Activated naive CD4-positive, alpha-beta T cell treated with anti-CD3 and anti-CD28 coated beads for 36 hours (primary cell): ENCODE measurements at regions of chr4 and their contacts with region 1.

Region 1: GRCh38 chr4:39638354-39639240 is at the start of gene SMIM14:
- DNase-seq: peak; percentile 93
- H3K4me3 Mint-ChIP-seq: peak within 1 kb of the TSS; percentile 85
- H3K27ac Mint-ChIP-seq: peak within 1 kb of the TSS; percentile 69
- H3K4me1 Mint-ChIP-seq: peaks cover 24% of the 10 kb centered on the region
- H3K27me3 Mint-ChIP-seq: no peaks in the 10 kb centered on the region
- total RNA-seq, gene SMIM14: 2.7 to 3.9 TPM

Region 2: DNA sequence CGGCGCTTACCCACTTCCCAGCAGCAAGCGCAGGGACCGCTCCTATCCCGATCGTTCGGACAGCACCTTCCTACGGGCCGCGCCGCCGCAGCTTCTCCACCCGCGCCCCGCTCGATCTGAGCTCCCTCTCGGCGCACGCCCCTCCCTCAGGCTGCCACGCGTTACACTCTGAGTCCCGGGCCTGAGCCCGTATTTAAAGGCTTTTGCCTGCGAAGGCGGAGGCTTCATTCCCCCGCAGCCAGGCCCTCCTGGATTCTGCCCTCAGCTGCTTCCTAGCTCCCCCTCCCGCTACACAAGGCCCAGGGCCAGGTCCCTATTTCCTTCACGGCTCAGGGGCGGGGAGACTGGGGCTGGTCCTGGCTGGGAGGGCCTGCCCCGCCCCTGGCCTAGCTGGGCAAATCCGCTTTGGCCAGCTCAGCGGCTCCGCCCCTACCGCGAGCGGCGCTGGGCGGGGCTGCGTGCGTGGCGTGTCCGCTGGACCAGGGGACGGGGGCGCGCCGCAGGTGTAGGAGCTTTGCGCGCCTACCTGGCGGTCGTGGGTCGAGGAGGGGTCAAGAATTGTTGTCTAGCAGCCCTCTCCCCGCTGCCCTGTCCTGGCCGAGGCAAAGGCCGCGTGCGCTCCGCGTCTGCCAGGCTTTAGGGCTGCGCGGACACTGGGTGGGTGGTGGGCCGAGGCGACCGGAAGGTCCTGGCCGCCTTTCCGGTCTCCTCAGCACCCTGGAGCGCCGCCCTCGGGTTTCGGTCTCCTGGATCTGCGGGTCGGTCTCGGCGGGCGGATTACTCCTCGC is 111.1 kb before region 1 on chr4 and contains the start of gene UGDH:
- CTCF ChIA-PET with region 1: no interaction called
- intact Hi-C with region 1: loop called (anchors 1 kb)
- DNase-seq: peak; percentile 91
- H3K4me3 Mint-ChIP-seq: peak within 1 kb of the TSS; percentile 97
- H3K27ac Mint-ChIP-seq: peak within 1 kb of the TSS; percentile 81
- H3K4me1 Mint-ChIP-seq: peaks cover 18% of the 10 kb centered on the region
- H3K27me3 Mint-ChIP-seq: no peaks in the 10 kb centered on the region
- total RNA-seq, gene UGDH: 11.7 to 14.6 TPM

Region 3: GRCh38 chr4:39621582-39621981 is 17.0 kb before region 1 on chr4:
- CTCF ChIA-PET with region 1: no interaction called
- intact Hi-C with region 1: loop called (anchors 1 kb)
- DNase-seq: no peak
- H3K4me3 Mint-ChIP-seq: no peak overlapping the region
- H3K27ac Mint-ChIP-seq: no peak overlapping the region
- H3K4me1 Mint-ChIP-seq: peaks cover 10% of the 10 kb centered on the region
- H3K27me3 Mint-ChIP-seq: no peaks in the 10 kb centered on the region

Region 4: DNA sequence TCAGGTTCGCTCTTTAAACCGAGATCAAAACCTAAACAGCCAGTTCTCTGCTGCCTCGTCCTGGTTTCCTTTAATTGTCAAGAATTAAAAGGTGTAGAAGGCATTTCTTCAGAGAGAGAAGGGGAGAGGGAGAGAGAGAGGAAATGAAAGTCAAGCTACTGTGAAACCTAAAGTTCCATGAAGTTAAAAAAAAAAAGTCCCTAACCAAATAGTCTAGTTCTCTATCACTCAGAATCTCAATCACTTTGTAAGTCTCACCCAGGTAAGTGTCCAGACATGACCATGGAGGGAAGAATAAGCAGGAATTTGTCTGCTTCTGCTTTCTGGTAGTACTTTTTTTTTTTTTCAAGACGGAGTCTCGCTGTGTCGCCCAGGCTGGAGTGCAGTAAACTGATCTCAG is 18.9 kb after region 1 on chr4:
- CTCF ChIA-PET with region 1: no interaction called
- intact Hi-C with region 1: no loop called
- DNase-seq: no peak
- H3K4me3 Mint-ChIP-seq: no peak overlapping the region
- H3K27ac Mint-ChIP-seq: no peak overlapping the region
- H3K4me1 Mint-ChIP-seq: peaks cover 5% of the 10 kb centered on the region
- H3K27me3 Mint-ChIP-seq: no peaks in the 10 kb centered on the region